Tibial artery (tissue), 4 donors: ENCODE measurements at regions of chr16 and their contacts with region 1.

Region 1: DNA sequence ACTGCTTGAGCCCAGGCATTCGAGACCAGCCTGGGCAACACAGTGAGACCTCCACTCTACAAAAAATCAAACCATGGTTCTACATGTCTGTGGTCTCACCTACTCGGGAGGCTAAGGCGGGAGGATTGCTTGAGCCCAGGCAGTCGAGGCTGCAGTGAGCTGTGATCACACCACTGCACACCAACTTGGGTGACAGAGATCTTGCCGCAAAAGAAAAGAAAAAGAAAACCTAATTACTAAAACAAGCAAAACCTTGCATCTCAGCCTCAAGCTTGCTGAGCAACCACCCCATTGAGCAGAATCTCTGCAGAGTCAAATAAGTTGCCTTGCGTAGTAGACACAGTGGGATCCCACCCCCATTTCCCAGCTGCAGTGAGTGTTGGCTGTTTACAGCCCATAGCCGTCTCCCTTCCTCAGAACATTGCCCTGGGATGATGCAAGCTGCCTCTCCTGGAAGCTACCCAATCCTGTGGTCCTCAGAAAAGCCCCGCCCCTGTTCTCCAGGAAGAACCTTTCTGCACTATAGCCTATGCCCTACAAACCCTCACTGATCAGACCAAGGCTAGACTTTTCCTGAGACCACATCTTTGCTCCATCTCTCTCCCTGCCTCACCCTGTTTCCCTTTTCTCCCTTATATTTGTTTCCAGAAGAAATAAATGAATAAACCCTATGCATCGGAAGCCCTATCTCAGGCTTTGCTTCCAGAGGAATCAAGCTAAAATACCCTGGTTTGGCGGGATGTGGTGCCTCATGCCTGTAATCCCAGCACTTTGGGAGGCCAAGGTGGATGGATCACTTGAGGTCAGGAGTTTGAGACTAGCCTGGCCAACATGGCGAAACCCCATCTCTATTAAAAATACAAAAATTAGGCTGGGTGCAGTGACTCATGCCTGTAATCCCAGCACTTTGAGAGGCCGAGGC is 16.7 kb upstream of the ERN2 start:
- DNase-seq: no peak
- H3K4me3 ChIP-seq: no peak overlapping the region
- H3K27ac ChIP-seq: no peak overlapping the region
- H3K4me1 ChIP-seq: no peaks in the 10 kb centered on the region
- H3K27me3 ChIP-seq: peaks cover 0 to 12% of the 10 kb centered on the region in 2 donors
- CTCF ChIP-seq: no peak

Region 2: DNA sequence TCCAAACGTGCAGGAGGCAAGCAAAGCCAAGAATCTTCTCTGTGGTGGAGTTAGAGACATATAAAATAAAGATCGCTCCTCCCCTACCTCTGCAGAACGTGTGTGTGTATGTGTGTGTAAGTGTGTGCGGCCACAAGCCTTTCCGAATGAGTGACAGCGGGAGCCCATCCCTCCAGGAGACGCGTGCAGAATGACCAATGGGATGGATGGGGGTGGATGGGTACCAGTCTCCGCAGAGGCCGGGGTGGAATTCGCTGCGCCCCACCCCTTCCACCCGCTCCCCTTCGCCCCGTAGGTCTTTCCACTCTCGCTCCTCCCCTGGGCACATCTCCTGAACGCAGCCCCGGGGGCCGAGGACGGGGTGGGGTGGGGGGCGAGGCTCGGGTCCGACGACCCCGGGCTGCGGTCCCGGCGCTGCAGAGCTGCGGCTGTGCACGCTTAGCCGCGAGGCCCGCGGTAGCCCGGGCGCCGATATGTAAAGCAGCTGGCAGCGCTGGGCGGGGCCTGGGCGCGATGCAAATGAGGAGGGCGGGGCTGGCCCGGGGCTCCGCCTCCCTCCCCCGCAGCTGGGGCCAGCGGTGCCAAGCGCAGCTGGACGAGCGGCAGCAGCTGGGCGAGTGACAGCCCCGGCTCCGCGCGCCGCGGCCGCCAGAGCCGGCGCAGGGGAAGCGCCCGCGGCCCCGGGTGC is 105.8 kb after region 1 on chr16 and contains the start of gene PRKCB:
- intact Hi-C with region 1: no loop called
- DNase-seq: peak; percentile 74 to 83
- H3K4me3 ChIP-seq: peak within 1 kb of the TSS; percentile 54 to 57
- H3K27ac ChIP-seq: no peak within 1 kb of the TSS
- H3K4me1 ChIP-seq: peaks cover 0 to 25% (median 8%) of the 10 kb centered on the region in 4 donors
- H3K27me3 ChIP-seq: peaks cover 0 to 22% of the 10 kb centered on the region in 2 donors
- CTCF ChIP-seq: no peak

Region 3: GRCh38 chr16:23863511-23864422 is 134.0 kb after region 1 on chr16:
- intact Hi-C with region 1: loop called (anchors 10 kb)
- DNase-seq: no peak
- H3K4me3 ChIP-seq: peak overlapping the region; percentile 1 to 11
- H3K27ac ChIP-seq: peak overlapping the region in 1 of 2 donors; percentile 1
- H3K4me1 ChIP-seq: peaks cover 0 to 8% (median 2%) of the 10 kb centered on the region in 4 donors
- H3K27me3 ChIP-seq: peaks cover 0 to 2% of the 10 kb centered on the region in 2 donors
- CTCF ChIP-seq: no peak

Region 4: GRCh38 chr16:23987443-23987842 is 257.7 kb after region 1 on chr16:
- intact Hi-C with region 1: no loop called
- DNase-seq: no peak
- H3K4me3 ChIP-seq: no peak overlapping the region
- H3K27ac ChIP-seq: no peak overlapping the region
- H3K4me1 ChIP-seq: no peaks in the 10 kb centered on the region
- H3K27me3 ChIP-seq: no peaks in the 10 kb centered on the region
- CTCF ChIP-seq: no peak